ENCODE measurements at regions of chr5 and their contacts with region 1.

Region 1: GRCh38 chr5:98773464-98774191 is at the start of gene RGMB:
- DNase-seq: peak; percentile 98
- H3K4me3 Mint-ChIP-seq: peak within 1 kb of the TSS; percentile 92
- H3K27ac Mint-ChIP-seq: peak within 1 kb of the TSS; percentile 99
- H3K4me1 Mint-ChIP-seq: peaks cover 26% of the 10 kb centered on the region
- H3K27me3 Mint-ChIP-seq: no peaks in the 10 kb centered on the region
- CTCF ChIP-seq: no peak
- total RNA-seq, gene RGMB: 17.5 and 20.3 TPM in 2 replicates

Region 2: DNA sequence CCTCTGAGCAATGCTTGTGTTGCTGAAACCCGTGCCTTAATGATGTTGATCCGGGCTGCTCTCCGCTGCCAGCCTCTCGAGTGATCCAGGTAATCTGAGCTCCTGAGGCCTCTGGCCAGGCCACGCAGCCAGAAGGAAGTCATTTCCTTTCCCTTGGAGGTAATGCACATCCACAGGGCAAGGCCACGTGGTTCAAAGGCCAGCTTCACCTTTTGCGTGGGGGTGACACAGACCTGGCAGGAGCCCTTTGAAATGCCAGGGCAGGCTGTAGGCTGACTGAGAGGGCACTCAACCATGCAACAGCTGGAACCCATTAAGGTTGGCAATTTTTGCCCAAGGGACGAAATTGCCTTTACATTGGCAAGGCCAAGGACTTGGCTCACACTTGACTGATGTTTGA is 1711.6 kb before region 1 on chr5:
- CTCF ChIA-PET with region 1: no interaction called
- POLR2A ChIA-PET with region 1: no interaction called
- intact Hi-C with region 1: no loop called
- DNase-seq: no peak
- H3K4me3 Mint-ChIP-seq: no peak overlapping the region
- H3K27ac Mint-ChIP-seq: no peak overlapping the region
- H3K4me1 Mint-ChIP-seq: no peaks in the 10 kb centered on the region
- H3K27me3 Mint-ChIP-seq: peaks cover 20% of the 10 kb centered on the region
- CTCF ChIP-seq: no peak

Region 3: DNA sequence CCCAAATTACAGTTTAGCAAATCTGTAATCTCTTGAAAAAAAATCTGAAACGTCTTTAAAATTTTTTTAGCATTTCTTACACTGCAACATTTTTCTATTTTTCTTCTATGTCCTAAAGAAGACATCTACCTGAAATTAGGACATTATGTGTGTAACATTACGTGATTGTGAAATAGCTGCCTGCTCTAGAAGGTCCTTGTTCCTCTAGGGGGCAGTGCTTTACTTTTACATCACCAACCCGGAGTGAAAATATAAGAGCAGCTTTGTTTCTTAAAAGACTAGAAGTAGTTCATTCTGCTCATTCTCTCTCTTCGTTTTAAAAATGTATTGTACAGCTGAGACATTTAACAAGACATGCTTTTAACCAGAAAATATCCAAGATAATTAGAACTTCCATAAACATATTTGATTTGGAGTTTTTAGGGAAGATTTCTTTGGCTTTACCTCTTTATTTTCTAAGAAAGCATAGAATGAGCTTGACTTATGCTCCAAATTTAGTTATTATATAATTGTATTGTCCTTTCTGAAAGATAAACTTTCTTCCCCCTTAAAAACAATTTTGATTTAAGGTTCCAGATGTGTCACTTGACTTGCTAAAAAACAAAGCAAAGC is 1542.5 kb before region 1 on chr5:
- CTCF ChIA-PET with region 1: interaction called, 31 read pairs
- POLR2A ChIA-PET with region 1: interaction called, 3 read pairs
- intact Hi-C with region 1: loop called (anchors 1 kb)
- DNase-seq: peak; percentile 77
- H3K4me3 Mint-ChIP-seq: no peak overlapping the region
- H3K27ac Mint-ChIP-seq: no peak overlapping the region
- H3K4me1 Mint-ChIP-seq: peaks cover 7% of the 10 kb centered on the region
- H3K27me3 Mint-ChIP-seq: no peaks in the 10 kb centered on the region
- CTCF ChIP-seq: peak; percentile 75

Region 4: GRCh38 chr5:97838214-97838613 is 935.4 kb before region 1 on chr5:
- CTCF ChIA-PET with region 1: interaction called, 3 read pairs
- POLR2A ChIA-PET with region 1: interaction called, 4 read pairs
- intact Hi-C with region 1: loop called (anchors 1 kb)
- DNase-seq: peak; percentile 93
- H3K4me3 Mint-ChIP-seq: no peak overlapping the region
- H3K27ac Mint-ChIP-seq: no peak overlapping the region
- H3K4me1 Mint-ChIP-seq: peaks cover 35% of the 10 kb centered on the region
- H3K27me3 Mint-ChIP-seq: no peaks in the 10 kb centered on the region
- CTCF ChIP-seq: no peak

Region 5: GRCh38 chr5:98454904-98455303 is 318.7 kb before region 1 on chr5:
- CTCF ChIA-PET with region 1: interaction called, 77 read pairs
- POLR2A ChIA-PET with region 1: interaction called, 9 read pairs
- intact Hi-C with region 1: loop called (anchors 1 kb)
- DNase-seq: peak; percentile 85
- H3K4me3 Mint-ChIP-seq: peak overlapping the region; percentile 17
- H3K27ac Mint-ChIP-seq: peak overlapping the region; percentile 79
- H3K4me1 Mint-ChIP-seq: peaks cover 7% of the 10 kb centered on the region
- H3K27me3 Mint-ChIP-seq: no peaks in the 10 kb centered on the region
- CTCF ChIP-seq: peak; percentile 30

Region 6: GRCh38 chr5:98827161-98827560 is 53.5 kb after region 1 on chr5:
- CTCF ChIA-PET with region 1: interaction called, 6 read pairs
- POLR2A ChIA-PET with region 1: no interaction called
- intact Hi-C with region 1: loop called (anchors 2 kb)
- DNase-seq: peak; percentile 60
- H3K4me3 Mint-ChIP-seq: no peak overlapping the region
- H3K27ac Mint-ChIP-seq: no peak overlapping the region
- H3K4me1 Mint-ChIP-seq: no peaks in the 10 kb centered on the region
- H3K27me3 Mint-ChIP-seq: no peaks in the 10 kb centered on the region
- CTCF ChIP-seq: peak; percentile 57

Region 7: DNA sequence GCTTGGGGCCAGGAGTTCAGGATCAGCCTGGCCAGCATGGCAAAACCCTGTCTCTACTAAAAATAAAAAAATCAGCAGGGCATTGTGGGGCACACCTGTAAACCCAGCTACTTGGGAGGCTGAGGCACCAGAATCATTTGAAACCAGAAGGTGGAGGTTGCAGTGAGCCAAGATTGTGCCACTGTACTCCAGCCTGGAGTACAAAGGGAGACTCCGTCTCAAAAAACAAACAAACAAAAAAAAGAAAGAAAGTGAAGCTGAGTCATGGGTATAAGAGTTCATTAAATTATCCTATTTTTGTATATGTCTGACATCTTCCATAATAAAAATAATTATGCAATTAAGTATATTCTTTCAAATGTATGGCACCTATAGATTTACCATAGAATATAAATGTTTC is 118.0 kb after region 1 on chr5:
- CTCF ChIA-PET with region 1: no interaction called
- POLR2A ChIA-PET with region 1: no interaction called
- intact Hi-C with region 1: no loop called
- DNase-seq: no peak
- H3K4me3 Mint-ChIP-seq: no peak overlapping the region
- H3K27ac Mint-ChIP-seq: no peak overlapping the region
- H3K4me1 Mint-ChIP-seq: no peaks in the 10 kb centered on the region
- H3K27me3 Mint-ChIP-seq: no peaks in the 10 kb centered on the region
- CTCF ChIP-seq: no peak

Measured in MCF 10A (cell line).